ENCODE measurements at regions of chr22 and their contacts with region 1.

Region 1: DNA sequence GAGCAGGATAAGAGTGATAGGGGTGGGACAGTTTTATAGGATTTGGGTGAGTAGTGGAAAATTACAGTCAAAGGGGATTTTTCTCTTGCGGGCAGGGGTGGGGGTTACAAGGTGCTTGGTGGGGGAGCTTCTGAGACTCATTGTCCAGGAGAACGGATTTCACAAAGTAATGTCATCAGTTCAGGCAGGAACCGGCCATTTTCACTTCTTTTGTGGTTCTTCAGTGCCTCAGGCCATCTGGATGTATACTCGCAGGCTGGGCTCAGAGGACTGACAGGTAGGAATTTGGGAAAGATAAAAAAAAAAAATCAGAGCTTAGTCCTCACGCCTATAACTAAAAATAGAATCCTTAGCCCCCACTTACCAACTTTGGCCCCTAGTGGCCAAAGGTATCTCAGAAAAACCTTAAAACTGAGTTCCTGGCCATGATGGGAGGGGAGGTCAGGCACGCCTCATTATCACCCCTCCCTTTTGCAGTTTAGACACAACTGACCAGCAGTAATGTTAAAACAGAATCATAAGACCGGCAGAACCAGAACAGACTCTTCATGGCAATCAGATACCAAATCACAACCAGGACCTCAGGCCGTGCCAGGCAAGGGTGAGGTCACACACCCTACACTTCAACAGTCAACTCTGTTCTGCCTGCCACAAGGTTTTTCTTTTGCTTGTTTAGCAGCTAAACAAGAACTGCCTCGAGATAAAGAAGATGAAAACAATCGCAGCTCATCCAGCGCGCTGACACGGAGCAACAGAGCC is 8.9 kb upstream of the APOBEC3G start:
- DNase-seq: no peak
- ATAC-seq: peak; percentile 16
- H3K4me3 ChIP-seq: peak overlapping the region; percentile 63
- H3K27ac ChIP-seq: peak overlapping the region; percentile 92
- H3K4me1 ChIP-seq: peaks cover 57% of the 10 kb centered on the region
- H3K27me3 ChIP-seq: no peaks in the 10 kb centered on the region
- CTCF ChIP-seq: peak; percentile 17 to 43 (median 37); a peak in 3 of 6 replicates
- EP300 ChIP-seq: no peak
- POLR2A ChIP-seq: no peak
- RAD21 ChIP-seq: no peak

Region 2: GRCh38 chr22:39013942-39014722 is 54.1 kb before region 1 on chr22 and contains the start of gene APOBEC3C:
- CTCF ChIA-PET with region 1: no interaction called
- POLR2A ChIA-PET with region 1: interaction called, 4 read pairs
- RAD21 ChIA-PET with region 1: interaction called, 6 read pairs
- SMC1A ChIA-PET with region 1: interaction called, 6 read pairs
- in situ Hi-C with region 1: no loop called
- intact Hi-C with region 1: loop called (anchors 2 kb)
- DNase-seq: peak; percentile 79
- ATAC-seq: peak; percentile 97
- H3K4me3 ChIP-seq: peak within 1 kb of the TSS; percentile 98
- H3K27ac ChIP-seq: peak within 1 kb of the TSS; percentile 94
- H3K4me1 ChIP-seq: peaks cover 6% of the 10 kb centered on the region
- H3K27me3 ChIP-seq: no peaks in the 10 kb centered on the region
- CTCF ChIP-seq: peak; percentile 7 to 46 (median 15); a peak in 3 of 6 replicates
- EP300 ChIP-seq: no peak
- POLR2A ChIP-seq: peak; percentile 79
- RAD21 ChIP-seq: peak; percentile 43
- polyA plus RNA-seq, gene APOBEC3C: 258 to 290 TPM

Region 3: DNA sequence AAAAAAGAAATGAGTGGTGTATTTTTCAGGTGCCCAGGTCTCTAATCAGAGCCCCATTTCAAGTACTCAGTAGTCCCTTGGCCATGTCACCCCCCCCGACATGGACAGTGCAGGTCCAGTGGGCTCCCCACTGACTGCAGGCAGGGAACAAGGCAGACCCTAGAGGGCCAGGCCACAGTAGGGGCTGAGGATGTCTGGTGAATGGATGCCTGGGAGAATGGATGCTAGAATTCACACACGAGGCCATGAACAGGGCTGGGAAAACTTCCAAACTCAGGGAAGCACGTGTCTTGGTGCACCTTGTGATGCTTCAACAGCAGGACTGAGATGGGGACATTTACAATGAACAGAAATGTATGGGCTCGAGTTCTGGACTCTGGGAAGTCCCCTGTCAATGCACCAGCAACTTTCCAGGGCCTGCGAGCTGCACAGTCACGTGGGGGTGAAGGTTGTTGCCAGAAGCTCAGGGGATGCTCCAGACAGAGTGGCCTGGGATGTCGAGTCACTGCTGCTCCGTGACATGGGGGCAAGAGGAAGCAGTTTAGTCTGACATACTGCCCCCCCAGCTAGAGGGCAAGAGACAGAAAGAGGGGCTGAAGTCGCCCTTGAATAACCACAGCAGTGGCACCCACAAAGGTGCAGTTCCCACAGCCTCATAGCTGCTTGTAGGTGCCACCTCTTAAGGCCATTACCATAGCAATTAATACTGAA is 12.0 kb after region 1 on chr22:
- CTCF ChIA-PET with region 1: interaction called, 3 read pairs
- POLR2A ChIA-PET with region 1: interaction called, 13 read pairs
- RAD21 ChIA-PET with region 1: interaction called, 9 read pairs
- SMC1A ChIA-PET with region 1: interaction called, 4 read pairs
- in situ Hi-C with region 1: no loop called
- intact Hi-C with region 1: no loop called
- DNase-seq: no peak
- ATAC-seq: peak; percentile 51
- H3K4me3 ChIP-seq: peak overlapping the region; percentile 43; the same call in 1 of the 2 replicates
- H3K27ac ChIP-seq: peak overlapping the region; percentile 41
- H3K4me1 ChIP-seq: peaks cover 30% of the 10 kb centered on the region
- H3K27me3 ChIP-seq: no peaks in the 10 kb centered on the region
- CTCF ChIP-seq: no peak
- EP300 ChIP-seq: no peak
- POLR2A ChIP-seq: no peak; the same call in none of the 2 replicates
- RAD21 ChIP-seq: no peak

Region 4: DNA sequence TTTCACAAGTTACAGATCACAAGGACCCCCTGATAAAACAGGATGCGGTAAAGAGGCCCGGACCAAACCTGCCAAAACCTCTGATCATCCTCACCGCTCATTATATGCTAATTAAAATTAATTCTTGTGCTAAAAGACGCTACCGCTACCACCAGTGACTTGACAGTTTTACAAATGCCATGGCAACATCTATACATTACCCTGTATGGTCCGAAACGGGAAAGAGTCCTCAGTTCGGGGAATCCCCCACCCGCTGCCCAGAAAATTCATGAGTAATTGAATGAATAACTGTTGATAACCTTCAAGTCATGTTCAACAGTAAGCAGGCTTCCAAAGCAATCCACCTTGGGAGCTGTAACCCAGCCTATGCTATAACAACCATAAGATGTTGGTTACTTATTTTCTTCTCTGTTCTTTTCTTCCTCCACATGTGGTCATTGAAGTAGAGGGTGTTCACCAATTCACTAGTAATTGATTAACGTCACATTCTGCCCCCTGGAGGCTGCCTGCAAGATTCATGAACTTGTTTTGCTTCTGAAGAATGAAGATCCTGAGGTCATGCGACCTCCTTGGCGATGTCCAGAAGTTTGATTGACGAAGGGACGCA is 49.5 kb after region 1 on chr22:
- CTCF ChIA-PET with region 1: interaction called, 8 read pairs
- POLR2A ChIA-PET with region 1: interaction called, 6 read pairs
- RAD21 ChIA-PET with region 1: interaction called, 20 read pairs
- SMC1A ChIA-PET with region 1: interaction called, 18 read pairs
- in situ Hi-C with region 1: no loop called
- intact Hi-C with region 1: loop called (anchors 2 kb)
- DNase-seq: peak; percentile 81
- ATAC-seq: peak; percentile 75
- H3K4me3 ChIP-seq: no peak overlapping the region
- H3K27ac ChIP-seq: peak overlapping the region; percentile 96
- H3K4me1 ChIP-seq: peaks cover 49% of the 10 kb centered on the region
- H3K27me3 ChIP-seq: no peaks in the 10 kb centered on the region
- CTCF ChIP-seq: peak; percentile 56 to 75 (median 64)
- EP300 ChIP-seq: peak; percentile 82 to 95
- POLR2A ChIP-seq: no peak
- RAD21 ChIP-seq: peak; percentile 86

Region 5: DNA sequence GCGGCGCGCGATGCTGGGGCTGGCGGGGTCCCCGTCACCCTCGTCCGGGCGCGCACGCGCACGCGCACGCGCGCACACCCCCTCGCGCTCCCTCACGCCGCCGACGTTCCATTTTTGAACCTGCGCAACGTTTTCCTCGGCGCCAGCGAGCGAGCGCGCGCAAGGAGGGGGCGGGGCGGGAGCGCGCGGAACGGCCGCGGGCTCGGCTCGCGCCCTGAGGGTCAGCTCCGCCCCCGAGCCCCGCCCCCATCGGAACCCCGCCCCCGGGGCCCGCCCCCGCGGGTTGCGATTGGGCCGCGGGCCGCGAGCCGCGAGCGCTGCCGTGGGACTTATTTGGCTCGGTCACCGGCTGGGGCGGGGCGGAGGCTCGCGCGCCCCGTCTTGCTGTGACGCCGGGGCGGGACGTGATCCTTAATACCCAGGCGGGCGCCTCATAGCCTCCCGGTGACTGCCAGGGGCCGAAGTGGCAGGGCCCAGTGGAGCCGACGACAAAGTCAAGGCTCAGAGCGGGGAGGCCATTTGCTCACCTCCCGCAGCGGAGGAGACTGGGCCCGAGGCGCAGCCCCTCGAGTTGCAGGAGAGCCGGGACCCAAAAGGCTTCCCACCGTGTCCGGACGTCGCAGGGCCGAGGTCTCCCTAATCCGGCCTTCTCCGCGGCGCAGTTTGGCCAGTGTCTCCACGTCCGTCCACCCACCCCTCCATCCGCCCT is 84.5 kb after region 1 on chr22 and contains the start of gene CBX7:
- CTCF ChIA-PET with region 1: no interaction called
- POLR2A ChIA-PET with region 1: interaction called, 10 read pairs
- RAD21 ChIA-PET with region 1: interaction called, 4 read pairs
- SMC1A ChIA-PET with region 1: interaction called, 3 read pairs
- in situ Hi-C with region 1: no loop called
- intact Hi-C with region 1: no loop called
- DNase-seq: peak; percentile 46
- ATAC-seq: peak; percentile 79
- H3K4me3 ChIP-seq: peak within 1 kb of the TSS; percentile 80
- H3K27ac ChIP-seq: peak within 1 kb of the TSS; percentile 73
- H3K4me1 ChIP-seq: peaks cover 41% of the 10 kb centered on the region
- H3K27me3 ChIP-seq: peaks cover 3 to 12% of the 10 kb centered on the region in 2 experiments
- CTCF ChIP-seq: no peak
- EP300 ChIP-seq: no peak
- POLR2A ChIP-seq: peak; percentile 73
- RAD21 ChIP-seq: no peak
- polyA plus RNA-seq, gene CBX7: 0.18 to 0.64 TPM

Measured in GM12878 (cell line).